H1 (cell line): ENCODE measurements at regions of chr2 and their contacts with region 1.

Region 1: DNA sequence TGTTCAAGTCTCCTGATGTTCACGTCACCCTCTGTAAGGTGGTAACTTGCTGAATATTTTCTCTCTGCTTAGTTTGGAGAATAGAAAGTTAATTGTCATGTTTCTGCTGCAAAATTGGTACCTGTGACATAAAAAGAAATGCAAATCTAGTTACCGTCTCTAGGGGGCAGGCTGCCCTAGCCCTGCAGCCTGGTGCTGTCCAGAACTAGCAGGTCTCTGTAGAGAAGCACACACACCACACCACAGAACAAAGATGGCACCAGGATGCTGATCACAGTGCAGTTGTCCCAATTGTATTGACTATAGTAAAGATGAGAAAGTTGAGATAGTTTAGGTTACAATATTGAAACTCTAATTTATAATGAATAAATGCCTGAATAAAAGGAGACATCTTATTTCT is 47.0 kb downstream of the SLC9A4 start:
- DNase-seq: no peak
- H3K4me3 ChIP-seq: no peak overlapping the region
- H3K27ac ChIP-seq: no peak overlapping the region
- H3K4me1 ChIP-seq: no peaks in the 10 kb centered on the region
- H3K27me3 ChIP-seq: peaks cover 0 to 2% (median 0%) of the 10 kb centered on the region in 4 experiments; a peak in 2 of 7 replicates
- CTCF ChIP-seq: peak; percentile 74 to 87 (median 85)
- EP300 ChIP-seq: no peak
- POLR2A ChIP-seq: no peak
- RAD21 ChIP-seq: peak; percentile 87 to 89

Region 2: GRCh38 chr2:102442967-102443828 is 76.8 kb before region 1 on chr2:
- CTCF ChIA-PET with region 1: no interaction called
- POLR2A ChIA-PET with region 1: no interaction called
- DNase-seq: no peak
- H3K4me3 ChIP-seq: no peak overlapping the region
- H3K27ac ChIP-seq: no peak overlapping the region
- H3K4me1 ChIP-seq: peaks cover 0 to 3% (median 0%) of the 10 kb centered on the region in 4 experiments; a peak in 1 of 7 replicates
- H3K27me3 ChIP-seq: no peaks in the 10 kb centered on the region
- CTCF ChIP-seq: peak in 2 of 3 experiments; percentile 65 to 69; a peak in 3 of 4 replicates
- EP300 ChIP-seq: no peak
- POLR2A ChIP-seq: no peak
- RAD21 ChIP-seq: peak; percentile 72 to 79

Region 3: GRCh38 chr2:102592597-102592996 is 72.6 kb after region 1 on chr2:
- CTCF ChIA-PET with region 1: interaction called, 12 read pairs
- POLR2A ChIA-PET with region 1: no interaction called
- DNase-seq: peak in 1 of 2 experiments; percentile 57
- H3K4me3 ChIP-seq: no peak overlapping the region
- H3K27ac ChIP-seq: no peak overlapping the region
- H3K4me1 ChIP-seq: no peaks in the 10 kb centered on the region
- H3K27me3 ChIP-seq: no peaks in the 10 kb centered on the region
- CTCF ChIP-seq: peak in 2 of 3 experiments; percentile 57 to 71; a peak in 2 of 4 replicates
- EP300 ChIP-seq: no peak
- POLR2A ChIP-seq: no peak
- RAD21 ChIP-seq: peak; percentile 81 to 83

Region 4: DNA sequence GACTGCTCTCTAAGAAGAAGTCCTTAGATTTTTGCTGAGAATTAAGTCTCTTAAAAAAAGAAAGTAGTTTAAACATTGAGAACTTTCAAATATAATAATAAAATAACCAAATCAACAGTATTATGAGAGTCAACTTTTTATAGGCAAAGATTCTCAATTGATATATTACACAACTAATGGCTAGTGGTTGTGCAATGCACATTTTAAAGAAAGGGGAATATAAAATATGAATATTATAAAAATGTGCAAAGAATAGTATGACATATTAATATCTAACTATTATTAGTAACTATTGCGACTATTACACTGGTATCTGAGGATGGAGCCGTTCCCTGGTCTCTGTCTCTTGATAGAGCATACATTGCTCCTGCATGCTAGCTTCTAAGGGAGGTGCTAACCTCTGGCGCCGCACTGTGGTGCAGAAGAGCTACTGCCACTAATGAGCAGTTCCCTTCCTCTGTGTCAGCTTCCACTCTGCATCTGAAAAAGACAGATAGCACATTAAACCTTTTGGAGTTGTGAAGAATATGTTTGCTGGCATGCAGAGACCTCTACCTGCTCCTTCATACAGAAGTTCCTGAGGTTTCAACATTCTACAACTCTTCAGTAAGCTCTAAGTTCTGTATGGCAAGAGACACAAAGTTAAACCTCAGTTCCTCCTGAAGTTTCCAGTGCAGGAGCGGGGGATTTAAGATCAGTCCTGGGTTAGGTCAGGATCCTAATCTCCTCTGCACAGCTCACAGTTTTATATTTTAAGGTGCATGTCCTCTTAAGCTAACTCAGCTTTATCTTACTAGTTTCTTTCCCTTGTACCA is 95.8 kb after region 1 on chr2:
- CTCF ChIA-PET with region 1: interaction called, 23 read pairs
- POLR2A ChIA-PET with region 1: no interaction called
- DNase-seq: no peak
- H3K4me3 ChIP-seq: no peak overlapping the region
- H3K27ac ChIP-seq: no peak overlapping the region
- H3K4me1 ChIP-seq: peaks cover 0 to 13% (median 7%) of the 10 kb centered on the region in 4 experiments; a peak in 6 of 7 replicates
- H3K27me3 ChIP-seq: peaks cover 16 to 30% (median 26%) of the 10 kb centered on the region in 4 experiments
- CTCF ChIP-seq: peak; percentile 80 to 95 (median 89)
- EP300 ChIP-seq: no peak
- POLR2A ChIP-seq: no peak
- RAD21 ChIP-seq: peak; percentile 88 to 90

Region 5: GRCh38 chr2:102703748-102704147 is 183.7 kb after region 1 on chr2:
- CTCF ChIA-PET with region 1: interaction called, 14 read pairs
- POLR2A ChIA-PET with region 1: no interaction called
- DNase-seq: no peak
- H3K4me3 ChIP-seq: no peak overlapping the region
- H3K27ac ChIP-seq: no peak overlapping the region
- H3K4me1 ChIP-seq: peaks cover 0 to 2% (median under 1%) of the 10 kb centered on the region in 4 experiments; a peak in 2 of 7 replicates
- H3K27me3 ChIP-seq: no peaks in the 10 kb centered on the region
- CTCF ChIP-seq: peak in 2 of 3 experiments; percentile 51 to 58; a peak in 3 of 4 replicates
- EP300 ChIP-seq: no peak
- POLR2A ChIP-seq: no peak
- RAD21 ChIP-seq: peak; percentile 70 to 75